ENCODE measurements at regions of chr2 and their contacts with region 1.

Region 1: GRCh38 chr2:127701193-127701650 is at the start of gene SFT2D3:
- DNase-seq: peak; percentile 84 to 92 (median 89)
- ATAC-seq: peak; percentile 83
- H3K4me3 ChIP-seq: peak within 1 kb of the TSS; percentile 75
- H3K4me3 Mint-ChIP-seq: peak within 1 kb of the TSS; percentile 88 to 96 (median 94)
- H3K27ac ChIP-seq: peak within 1 kb of the TSS; percentile 83
- H3K27ac Mint-ChIP-seq: peak within 1 kb of the TSS; percentile 96 to 99 (median 98)
- H3K4me1 ChIP-seq: peaks cover 21 to 29% of the 10 kb centered on the region in 2 donors
- H3K4me1 Mint-ChIP-seq: peaks cover 18 to 52% (median 46%) of the 10 kb centered on the region in 7 donors
- H3K27me3 ChIP-seq: no peaks in the 10 kb centered on the region
- H3K27me3 Mint-ChIP-seq: peaks cover 0 to under 1% (median 0%) of the 10 kb centered on the region in 5 donors
- total RNA-seq, gene SFT2D3: 6.0 to 17.8 (median 8.9) TPM

Region 2: DNA sequence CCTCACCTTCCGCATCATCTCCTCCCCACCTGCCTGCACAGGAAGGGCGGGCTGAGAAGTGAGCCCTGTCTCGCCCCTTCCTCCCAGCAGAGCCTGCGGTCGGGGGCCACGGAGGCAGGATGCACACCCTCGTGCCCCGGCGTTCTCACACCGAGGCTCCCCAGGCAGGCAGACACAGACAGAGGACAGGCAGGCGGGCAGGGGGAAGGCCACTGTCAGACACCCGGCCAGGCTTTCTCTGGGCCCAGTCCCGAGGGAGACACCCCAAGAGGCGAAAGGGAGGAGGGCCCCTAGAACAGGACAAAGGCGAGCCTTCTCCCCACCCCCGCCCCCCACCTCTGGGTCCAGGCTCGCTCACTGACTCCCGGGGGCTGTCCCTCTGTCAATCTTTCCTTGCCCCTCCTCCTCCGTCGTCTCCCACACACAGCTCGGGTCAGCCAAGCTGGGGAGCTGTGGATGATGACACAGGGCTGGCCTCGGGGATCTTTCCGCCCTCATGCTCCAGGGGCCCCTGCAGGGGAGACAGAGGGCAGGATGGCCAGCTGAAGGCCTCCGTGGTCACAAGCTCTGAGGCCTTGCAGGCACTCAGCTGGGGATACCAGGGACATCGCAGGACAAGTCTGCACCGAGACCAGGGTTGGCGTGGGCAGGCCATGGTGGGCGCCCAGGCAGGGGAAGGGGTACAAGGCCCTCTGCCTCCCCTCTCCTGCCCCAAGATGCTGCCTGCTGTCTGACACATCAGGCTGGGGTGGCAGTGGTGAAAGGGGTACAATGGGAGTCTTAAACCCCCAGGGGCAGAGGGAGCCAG is 619.2 kb before region 1 on chr2:
- CTCF ChIA-PET with region 1: no interaction called
- POLR2A ChIA-PET with region 1: interaction called, 5 read pairs
- intact Hi-C with region 1: loop called in 1 of 2 experiments (anchors 5 kb)
- DNase-seq: peak; percentile 64 to 87 (median 83)
- ATAC-seq: peak; percentile 83
- H3K4me3 ChIP-seq: peak overlapping the region; percentile 99
- H3K4me3 Mint-ChIP-seq: peak overlapping the region; percentile 89 to 97 (median 94)
- H3K27ac ChIP-seq: peak overlapping the region; percentile 89
- H3K27ac Mint-ChIP-seq: peak overlapping the region; percentile 94 to 99 (median 98)
- H3K4me1 ChIP-seq: peaks cover 78 to 80% of the 10 kb centered on the region in 2 donors
- H3K4me1 Mint-ChIP-seq: peaks cover 65 to 95% (median 83%) of the 10 kb centered on the region in 7 donors
- H3K27me3 ChIP-seq: no peaks in the 10 kb centered on the region
- H3K27me3 Mint-ChIP-seq: no peaks in the 10 kb centered on the region

Region 3: GRCh38 chr2:127408004-127408806 is 293.0 kb before region 1 on chr2:
- CTCF ChIA-PET with region 1: no interaction called
- POLR2A ChIA-PET with region 1: no interaction called
- intact Hi-C with region 1: loop called in 1 of 2 experiments (anchors 5 kb)
- DNase-seq: peak; percentile 46 to 92 (median 64)
- ATAC-seq: peak; percentile 92
- H3K4me3 ChIP-seq: peak overlapping the region; percentile 36
- H3K4me3 Mint-ChIP-seq: peak overlapping the region; percentile 61 to 87 (median 74)
- H3K27ac ChIP-seq: no peak overlapping the region
- H3K27ac Mint-ChIP-seq: peak overlapping the region in 3 of 9 donors; percentile 48 to 83 (median 58)
- H3K4me1 ChIP-seq: no peaks in the 10 kb centered on the region
- H3K4me1 Mint-ChIP-seq: peaks cover 4 to 26% (median 12%) of the 10 kb centered on the region in 7 donors
- H3K27me3 ChIP-seq: no peaks in the 10 kb centered on the region
- H3K27me3 Mint-ChIP-seq: peaks cover 0 to 10% (median 0%) of the 10 kb centered on the region in 5 donors

Region 4: DNA sequence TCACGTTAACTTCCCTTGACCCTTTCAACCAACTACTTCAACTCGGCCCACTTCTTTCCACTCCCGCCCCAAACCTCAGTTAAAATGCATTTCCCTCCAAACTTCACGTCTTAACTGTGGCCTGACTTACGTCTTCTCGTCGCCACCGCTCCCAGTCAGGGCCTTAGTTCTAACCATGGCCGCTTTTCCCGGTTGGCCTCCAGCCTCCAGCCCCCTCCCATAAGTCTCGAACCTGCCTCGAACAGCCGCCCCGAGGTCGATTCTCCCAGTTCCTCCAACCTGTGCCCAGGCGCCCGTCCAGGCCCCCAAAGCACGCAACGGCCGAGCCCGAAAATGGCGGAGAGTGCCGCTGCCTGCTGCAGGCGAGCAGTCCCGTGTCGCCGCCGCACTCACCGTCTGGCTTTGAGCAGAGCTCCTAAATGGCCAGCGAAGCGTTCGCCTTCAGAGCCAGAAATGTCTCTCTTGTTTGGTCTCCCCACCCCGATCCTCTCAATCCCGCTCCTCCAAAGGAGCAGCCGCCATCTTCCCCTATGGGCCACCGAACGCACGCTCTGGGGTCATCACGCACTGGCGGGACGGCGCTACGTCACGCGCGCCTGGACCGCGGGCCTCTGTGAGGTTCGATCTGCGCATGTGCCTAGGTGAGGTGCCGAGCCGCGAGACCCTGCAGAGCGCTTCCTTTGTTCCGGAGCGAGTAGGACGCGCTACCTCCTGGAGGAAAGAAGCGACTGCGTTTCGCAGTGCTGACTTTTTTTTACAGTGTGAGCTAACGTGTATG is 109.6 kb after region 1 on chr2 and contains the start of gene WDR33:
- CTCF ChIA-PET with region 1: no interaction called
- POLR2A ChIA-PET with region 1: interaction called, 17 read pairs
- intact Hi-C with region 1: loop called (anchors 1 kb)
- DNase-seq: peak; percentile 84 to 94 (median 93)
- ATAC-seq: peak; percentile 97
- H3K4me3 ChIP-seq: peak within 1 kb of the TSS; percentile 79
- H3K4me3 Mint-ChIP-seq: peak within 1 kb of the TSS; percentile 91 to 100 (median 96)
- H3K27ac ChIP-seq: peak within 1 kb of the TSS; percentile 98
- H3K27ac Mint-ChIP-seq: peak within 1 kb of the TSS; percentile 94 to 100 (median 99)
- H3K4me1 ChIP-seq: peaks cover 17 to 24% of the 10 kb centered on the region in 2 donors
- H3K4me1 Mint-ChIP-seq: peaks cover 33 to 62% (median 51%) of the 10 kb centered on the region in 7 donors
- H3K27me3 ChIP-seq: no peaks in the 10 kb centered on the region
- H3K27me3 Mint-ChIP-seq: peaks cover 0 to 12% (median 0%) of the 10 kb centered on the region in 5 donors
- total RNA-seq, gene WDR33: 62.6 to 98.7 (median 72.3) TPM

Region 5: DNA sequence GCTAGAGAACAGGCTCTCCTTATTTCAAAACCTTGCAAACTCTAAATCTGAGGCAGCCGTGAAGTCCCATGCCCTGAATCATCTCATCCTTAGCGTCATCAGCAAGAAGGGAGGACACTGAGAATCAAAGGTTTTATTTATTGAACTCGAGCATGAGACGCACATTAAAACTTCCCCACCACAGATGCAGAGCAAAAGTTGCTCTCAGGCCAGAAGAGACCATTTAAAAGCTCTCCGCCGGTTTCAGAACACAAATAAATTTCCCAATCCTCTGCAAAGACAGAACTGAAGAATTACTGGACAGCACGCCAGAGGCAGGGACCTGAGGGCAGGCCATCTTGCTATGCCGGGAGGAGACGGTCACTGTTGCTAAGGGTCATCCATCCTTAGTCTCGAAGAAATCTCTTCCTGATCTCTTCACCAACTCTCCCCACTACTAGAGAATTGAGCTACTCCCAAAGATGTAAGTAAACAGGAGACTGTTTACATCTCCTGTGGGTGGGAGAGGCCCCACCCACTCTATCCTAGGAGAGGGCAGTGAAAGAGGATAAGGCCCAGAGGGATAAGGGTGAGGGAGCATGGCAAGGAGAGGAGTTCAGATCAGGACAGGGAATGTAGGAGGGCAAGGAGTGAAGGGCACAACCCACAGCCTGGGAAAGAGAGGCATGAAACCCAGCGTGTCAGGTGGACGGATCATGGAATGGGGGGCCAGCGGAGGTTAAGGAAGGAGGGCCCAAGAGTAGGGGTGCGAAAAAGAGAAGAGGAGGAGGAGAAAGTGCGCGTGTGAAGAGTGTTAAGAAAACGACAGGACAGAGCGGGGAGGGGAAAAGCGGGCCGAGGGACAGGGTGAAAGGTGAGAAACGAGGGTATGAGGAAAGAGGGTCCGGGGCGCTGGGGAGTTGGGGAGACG is 183.5 kb after region 1 on chr2:
- CTCF ChIA-PET with region 1: no interaction called
- POLR2A ChIA-PET with region 1: interaction called, 3 read pairs
- intact Hi-C with region 1: loop called in 1 of 2 experiments (anchors 10 kb)
- DNase-seq: peak in 1 of 9 donors; percentile 7
- ATAC-seq: no peak
- H3K4me3 ChIP-seq: peak overlapping the region; percentile 43
- H3K4me3 Mint-ChIP-seq: peak overlapping the region; percentile 78 to 100 (median 92)
- H3K27ac ChIP-seq: peak overlapping the region; percentile 55
- H3K27ac Mint-ChIP-seq: peak overlapping the region; percentile 75 to 94 (median 89)
- H3K4me1 ChIP-seq: peaks cover 15 to 24% of the 10 kb centered on the region in 2 donors
- H3K4me1 Mint-ChIP-seq: peaks cover 36 to 73% (median 66%) of the 10 kb centered on the region in 7 donors
- H3K27me3 ChIP-seq: no peaks in the 10 kb centered on the region
- H3K27me3 Mint-ChIP-seq: no peaks in the 10 kb centered on the region

Region 6: DNA sequence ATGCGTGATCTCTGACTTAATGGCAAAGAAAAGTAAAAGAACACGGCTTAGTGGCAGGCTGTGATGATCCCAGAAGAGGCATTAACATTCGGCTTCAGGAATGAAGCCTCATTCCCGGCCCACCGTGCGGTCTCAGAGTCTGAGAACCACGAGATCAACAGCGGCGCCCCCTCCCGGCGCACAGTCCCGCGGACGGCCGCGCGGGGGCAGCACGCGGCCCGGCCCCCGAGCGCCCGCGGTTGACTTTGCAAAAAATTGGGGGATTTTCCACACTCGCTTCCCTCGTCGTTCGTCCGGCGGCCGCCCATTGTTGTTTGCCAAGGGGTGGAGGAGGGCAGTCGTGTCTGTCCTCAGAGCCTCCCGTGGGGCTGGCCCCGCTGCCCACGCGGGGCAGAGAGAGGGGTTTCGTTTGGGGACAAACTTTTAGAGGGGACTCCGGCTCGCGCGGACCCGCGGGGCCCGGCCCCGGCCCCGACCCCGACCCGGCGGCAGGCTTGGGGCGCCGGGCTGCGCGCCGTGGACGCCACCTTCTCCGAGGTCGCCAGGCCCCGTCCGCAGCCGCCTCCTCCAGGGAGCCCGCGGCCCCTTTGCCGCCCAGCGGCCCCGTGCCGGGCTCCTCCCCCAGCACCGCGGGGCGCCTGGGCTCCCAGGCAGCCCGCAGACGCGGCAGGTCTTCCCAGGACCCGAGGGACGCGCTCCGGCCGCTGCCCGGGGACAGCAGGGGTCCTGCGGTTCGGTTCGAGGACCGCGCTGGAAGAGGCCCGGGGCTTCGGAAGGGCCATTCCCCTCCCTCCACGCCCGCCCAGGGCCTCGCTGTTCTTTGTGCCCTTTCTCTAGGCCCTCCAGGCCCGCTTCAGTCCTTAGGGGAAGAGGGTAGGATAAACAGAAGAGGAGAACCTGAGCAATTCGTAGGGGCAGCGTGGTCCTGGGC is 620.8 kb after region 1 on chr2:
- CTCF ChIA-PET with region 1: no interaction called
- POLR2A ChIA-PET with region 1: no interaction called
- intact Hi-C with region 1: loop called in 1 of 2 experiments (anchors 5 kb)
- DNase-seq: peak; percentile 58 to 87 (median 76)
- ATAC-seq: peak; percentile 76
- H3K4me3 ChIP-seq: peak overlapping the region; percentile 68
- H3K4me3 Mint-ChIP-seq: peak overlapping the region; percentile 70 to 92 (median 76)
- H3K27ac ChIP-seq: peak overlapping the region; percentile 64
- H3K27ac Mint-ChIP-seq: peak overlapping the region in 6 of 9 donors; percentile 28 to 80 (median 50)
- H3K4me1 ChIP-seq: peaks cover 10 to 18% of the 10 kb centered on the region in 2 donors
- H3K4me1 Mint-ChIP-seq: peaks cover 10 to 24% (median 14%) of the 10 kb centered on the region in 7 donors
- H3K27me3 ChIP-seq: no peaks in the 10 kb centered on the region
- H3K27me3 Mint-ChIP-seq: peaks cover 0 to 16% (median 0%) of the 10 kb centered on the region in 5 donors

Measured in naive thymus-derived CD4-positive, alpha-beta T cell (primary cell).